ENCODE measurements at regions of chr5 and their contacts with region 1.

Region 1: GRCh38 chr5:41843456-41844370 is 26.5 kb downstream of the OXCT1 start:
- DNase-seq: peak in 1 of 2 donors; percentile 51
- ATAC-seq: peak in 6 of 8 donors; percentile 49 to 77 (median 70)
- H3K4me3 ChIP-seq: no peak overlapping the region
- H3K27ac ChIP-seq: no peak overlapping the region
- H3K4me1 ChIP-seq: peaks cover 0 to 11% (median 0%) of the 10 kb centered on the region in 9 donors
- H3K27me3 ChIP-seq: no peaks in the 10 kb centered on the region
- CTCF ChIP-seq: peak; percentile 56 to 87 (median 79)

Region 2: GRCh38 chr5:41670854-41671479 is 172.7 kb before region 1 on chr5:
- intact Hi-C with region 1: no loop called
- DNase-seq: no peak
- ATAC-seq: no peak
- H3K4me3 ChIP-seq: no peak overlapping the region
- H3K27ac ChIP-seq: no peak overlapping the region
- H3K4me1 ChIP-seq: no peaks in the 10 kb centered on the region
- H3K27me3 ChIP-seq: no peaks in the 10 kb centered on the region
- CTCF ChIP-seq: no peak

Region 3: GRCh38 chr5:41695920-41696582 is 147.7 kb before region 1 on chr5:
- intact Hi-C with region 1: loop called in 2 of 10 experiments (anchors 10 kb)
- DNase-seq: no peak
- ATAC-seq: no peak
- H3K4me3 ChIP-seq: no peak overlapping the region
- H3K27ac ChIP-seq: no peak overlapping the region
- H3K4me1 ChIP-seq: no peaks in the 10 kb centered on the region
- H3K27me3 ChIP-seq: no peaks in the 10 kb centered on the region
- CTCF ChIP-seq: peak in 5 of 9 donors; percentile 17 to 40 (median 31)

Region 4: GRCh38 chr5:41707853-41708603 is 135.7 kb before region 1 on chr5:
- intact Hi-C with region 1: loop called in 2 of 10 experiments (anchors 5 to 10 kb)
- DNase-seq: no peak
- ATAC-seq: no peak
- H3K4me3 ChIP-seq: no peak overlapping the region
- H3K27ac ChIP-seq: no peak overlapping the region
- H3K4me1 ChIP-seq: no peaks in the 10 kb centered on the region
- H3K27me3 ChIP-seq: no peaks in the 10 kb centered on the region
- CTCF ChIP-seq: peak in 3 of 9 donors; percentile 9 to 14 (median 12)